Mammary epithelial cell (primary cell): ENCODE measurements at regions of chr9 and their contacts with region 1.

Region 1: DNA sequence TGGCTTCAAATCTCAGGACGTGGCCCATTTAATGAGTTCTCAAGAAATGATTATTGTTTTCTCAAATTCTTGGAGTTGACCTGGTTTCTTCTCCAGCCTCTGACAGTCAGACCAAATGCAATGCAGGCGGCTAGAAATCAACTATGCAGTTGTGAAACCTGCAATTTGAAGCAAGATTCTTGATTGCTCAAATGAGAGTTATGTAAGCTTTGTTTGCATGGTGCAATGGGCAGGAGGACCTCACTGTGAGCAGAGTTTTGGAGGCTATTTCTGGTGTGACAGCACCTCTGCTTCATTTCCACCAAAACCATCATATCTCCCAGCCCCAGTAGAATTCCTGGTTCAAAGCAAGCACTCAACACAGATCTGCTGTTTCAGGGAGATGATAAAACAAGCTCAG is 500.0 kb upstream of the KLF4 start:
- DNase-seq: no peak
- H3K4me3 ChIP-seq: no peak overlapping the region
- H3K27ac ChIP-seq: no peak overlapping the region
- H3K4me1 ChIP-seq: no peaks in the 10 kb centered on the region
- H3K27me3 ChIP-seq: no peaks in the 10 kb centered on the region
- CTCF ChIP-seq: no peak

Region 2: DNA sequence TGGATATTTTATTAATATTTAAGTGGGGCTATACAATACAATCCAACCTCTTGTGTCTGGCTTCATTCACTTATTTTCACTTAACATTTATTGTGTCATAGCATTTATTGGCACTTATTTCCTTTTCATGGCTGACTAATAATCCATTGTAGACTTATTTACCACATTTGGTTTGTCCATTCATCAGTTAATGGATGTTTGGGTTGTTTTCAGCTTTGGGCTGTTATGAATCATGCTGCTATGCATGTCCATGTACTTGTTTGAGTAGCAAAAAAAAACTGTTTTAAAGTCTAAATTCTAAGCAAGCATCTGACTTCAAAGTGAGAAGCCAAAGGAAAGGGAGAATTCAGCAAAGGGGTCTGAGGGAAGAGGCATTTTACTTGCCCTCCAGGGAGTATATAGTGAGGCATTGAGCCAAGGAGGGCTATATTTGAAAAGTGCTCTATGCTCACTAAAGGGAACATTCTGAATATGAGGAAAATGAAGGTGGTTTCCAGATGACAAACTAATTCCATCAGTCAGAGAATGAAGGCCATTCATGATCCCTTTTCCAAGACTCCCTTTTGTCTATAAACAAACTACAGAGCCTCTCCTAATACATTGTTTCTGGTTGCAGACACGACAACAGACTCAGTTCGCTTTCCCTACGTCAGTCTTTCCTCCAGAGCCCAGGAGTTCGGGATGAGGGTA is 32.8 kb after region 1 on chr9:
- CTCF ChIA-PET with region 1: no interaction called
- dilution Hi-C with region 1: loop called (anchors 5 kb)
- in situ Hi-C with region 1: no loop called
- intact Hi-C with region 1: no loop called
- DNase-seq: peak; percentile 53
- H3K4me3 ChIP-seq: no peak overlapping the region
- H3K27ac ChIP-seq: no peak overlapping the region
- H3K4me1 ChIP-seq: no peaks in the 10 kb centered on the region
- H3K27me3 ChIP-seq: no peaks in the 10 kb centered on the region
- CTCF ChIP-seq: no peak

Region 3: DNA sequence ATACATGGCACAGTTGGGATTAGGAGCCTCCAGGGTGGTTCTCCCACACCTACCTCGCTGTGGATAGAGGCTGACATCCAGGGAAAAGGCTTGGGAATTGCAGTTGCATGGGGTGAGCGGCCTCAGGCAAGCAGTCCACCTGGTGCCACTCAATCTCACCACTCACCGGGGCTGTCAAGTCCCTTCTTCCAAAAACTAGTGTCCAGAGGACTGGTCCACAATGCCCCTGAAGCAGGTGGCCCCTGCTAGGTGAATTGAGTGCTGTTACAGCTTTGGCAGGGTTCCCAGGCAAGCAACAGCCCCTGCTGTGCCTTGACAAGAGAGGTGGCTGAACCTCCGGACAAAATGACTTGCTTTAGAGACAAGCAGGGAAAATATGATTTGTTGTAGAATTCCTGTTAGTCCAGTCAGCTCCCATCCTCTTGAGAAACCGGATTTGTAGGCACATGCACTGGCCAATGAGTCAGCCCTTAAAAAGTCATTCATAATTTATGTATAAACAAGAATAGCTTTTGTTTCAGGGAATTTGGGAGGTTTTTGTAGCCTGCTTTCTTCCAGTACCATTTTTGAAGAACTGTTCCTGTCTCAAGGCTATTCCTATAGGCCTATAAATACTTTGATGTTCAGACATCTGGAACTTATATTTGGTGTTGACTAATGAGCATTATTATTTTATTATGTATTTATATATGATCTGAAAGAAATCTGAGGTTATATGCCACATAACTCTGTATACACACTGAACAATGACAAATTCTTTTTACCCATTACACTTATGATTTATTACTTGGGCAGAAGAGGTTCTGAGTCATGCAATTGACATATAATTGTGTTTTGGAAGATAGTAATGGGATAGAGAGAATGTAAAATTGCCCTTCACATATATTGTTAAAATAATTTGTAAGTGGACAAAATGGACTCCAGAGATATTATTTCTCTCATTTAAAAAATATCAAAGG is 455.1 kb after region 1 on chr9:
- CTCF ChIA-PET with region 1: no interaction called
- dilution Hi-C with region 1: no loop called
- in situ Hi-C with region 1: no loop called
- intact Hi-C with region 1: no loop called
- DNase-seq: peak; percentile 91
- H3K4me3 ChIP-seq: peak overlapping the region; percentile 3 to 42 (median 38)
- H3K27ac ChIP-seq: peak overlapping the region; percentile 84
- H3K4me1 ChIP-seq: peaks cover 37% of the 10 kb centered on the region
- H3K27me3 ChIP-seq: no peaks in the 10 kb centered on the region
- CTCF ChIP-seq: no peak